Naive thymus-derived CD4-positive, alpha-beta T cell (primary cell): ENCODE measurements at regions of chr4 and their contacts with region 1.

Region 1: GRCh38 chr4:76305971-76306881 is at the start of gene STBD1:
- DNase-seq: peak in 7 of 9 donors; percentile 5 to 54 (median 19)
- ATAC-seq: peak; percentile 68
- H3K4me3 ChIP-seq: peak within 1 kb of the TSS; percentile 62
- H3K4me3 Mint-ChIP-seq: peak within 1 kb of the TSS; percentile 75 to 92 (median 82)
- H3K27ac ChIP-seq: peak within 1 kb of the TSS; percentile 20
- H3K27ac Mint-ChIP-seq: peak within 1 kb of the TSS in 7 of 9 donors; percentile 22 to 83 (median 63)
- H3K4me1 ChIP-seq: peaks cover 18% of the 10 kb centered on the region in 2 donors
- H3K4me1 Mint-ChIP-seq: peaks cover 20 to 37% (median 32%) of the 10 kb centered on the region in 7 donors
- H3K27me3 ChIP-seq: no peaks in the 10 kb centered on the region
- H3K27me3 Mint-ChIP-seq: peaks cover 0 to 42% (median 5%) of the 10 kb centered on the region in 5 donors
- total RNA-seq, gene STBD1: 0.62 to 2.1 (median 0.85) TPM in 4 of 5 experiments, not detected in the other

Region 2: GRCh38 chr4:76156635-76157034 is 149.6 kb before region 1 on chr4:
- CTCF ChIA-PET with region 1: no interaction called
- POLR2A ChIA-PET with region 1: no interaction called
- intact Hi-C with region 1: no loop called
- DNase-seq: no peak
- ATAC-seq: no peak
- H3K4me3 ChIP-seq: no peak overlapping the region
- H3K4me3 Mint-ChIP-seq: no peak overlapping the region
- H3K27ac ChIP-seq: no peak overlapping the region
- H3K27ac Mint-ChIP-seq: no peak overlapping the region
- H3K4me1 ChIP-seq: no peaks in the 10 kb centered on the region
- H3K4me1 Mint-ChIP-seq: no peaks in the 10 kb centered on the region
- H3K27me3 ChIP-seq: no peaks in the 10 kb centered on the region
- H3K27me3 Mint-ChIP-seq: peaks cover 0 to 5% (median 0%) of the 10 kb centered on the region in 5 donors

Region 3: DNA sequence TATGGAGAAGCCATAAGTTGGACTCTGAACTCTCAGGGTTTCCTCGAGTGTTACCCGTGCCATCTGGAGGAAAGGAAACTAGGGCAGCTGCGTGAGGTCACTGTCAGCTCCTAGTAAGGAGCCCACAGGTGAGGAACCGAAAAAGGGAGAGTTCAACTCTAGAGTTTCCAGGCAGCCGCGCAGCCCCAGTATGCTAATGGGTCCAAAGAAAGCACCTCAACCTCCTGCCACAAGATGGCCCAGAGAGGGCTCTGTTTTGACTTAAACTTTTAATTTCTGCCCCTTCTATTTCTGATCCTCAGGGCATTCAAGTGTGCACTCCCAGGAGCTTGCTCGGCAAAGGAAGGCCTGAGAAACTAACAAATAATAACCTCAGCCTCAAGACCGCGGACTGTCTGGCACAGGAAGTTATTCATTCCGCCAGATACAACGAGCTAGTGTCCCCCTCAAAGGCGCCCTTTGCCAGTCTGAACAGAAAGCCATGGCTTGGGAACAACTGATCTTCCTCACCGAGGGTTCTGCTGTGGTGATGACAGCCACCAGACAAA is 106.5 kb before region 1 on chr4:
- CTCF ChIA-PET with region 1: no interaction called
- POLR2A ChIA-PET with region 1: no interaction called
- intact Hi-C with region 1: no loop called
- DNase-seq: peak in 2 of 9 donors; percentile 1 to 14
- ATAC-seq: peak; percentile 54
- H3K4me3 ChIP-seq: no peak overlapping the region
- H3K4me3 Mint-ChIP-seq: peak overlapping the region in 7 of 10 donors; percentile 13 to 71 (median 56)
- H3K27ac ChIP-seq: no peak overlapping the region
- H3K27ac Mint-ChIP-seq: peak overlapping the region in 7 of 9 donors; percentile 48 to 90 (median 64)
- H3K4me1 ChIP-seq: peaks cover 0 to 19% of the 10 kb centered on the region in 2 donors
- H3K4me1 Mint-ChIP-seq: peaks cover 26 to 73% (median 63%) of the 10 kb centered on the region in 7 donors
- H3K27me3 ChIP-seq: no peaks in the 10 kb centered on the region
- H3K27me3 Mint-ChIP-seq: no peaks in the 10 kb centered on the region

Region 4: GRCh38 chr4:76354517-76355473 is 48.6 kb after region 1 on chr4:
- CTCF ChIA-PET with region 1: no interaction called
- POLR2A ChIA-PET with region 1: interaction called, 5 read pairs
- intact Hi-C with region 1: loop called (anchors 1 to 10 kb)
- DNase-seq: peak in 7 of 9 donors; percentile 3 to 32 (median 19)
- ATAC-seq: peak; percentile 75
- H3K4me3 ChIP-seq: no peak overlapping the region
- H3K4me3 Mint-ChIP-seq: peak overlapping the region in 9 of 10 donors; percentile 14 to 60 (median 18)
- H3K27ac ChIP-seq: no peak overlapping the region
- H3K27ac Mint-ChIP-seq: peak overlapping the region in 6 of 9 donors; percentile 0 to 67 (median 34)
- H3K4me1 ChIP-seq: peaks cover 0 to 7% of the 10 kb centered on the region in 2 donors
- H3K4me1 Mint-ChIP-seq: peaks cover 0 to 16% (median 12%) of the 10 kb centered on the region in 7 donors
- H3K27me3 ChIP-seq: no peaks in the 10 kb centered on the region
- H3K27me3 Mint-ChIP-seq: peaks cover 0 to 11% (median 4%) of the 10 kb centered on the region in 5 donors